AG04449 (cell line): ENCODE measurements at regions of chr1 and their contacts with region 1.

Region 1: GRCh38 chr1:32773018-32773763 is 44.0 kb downstream of the YARS1 start:
- DNase-seq: no peak
- H3K4me3 ChIP-seq: no peak overlapping the region
- CTCF ChIP-seq: peak; percentile 91

Region 2: DNA sequence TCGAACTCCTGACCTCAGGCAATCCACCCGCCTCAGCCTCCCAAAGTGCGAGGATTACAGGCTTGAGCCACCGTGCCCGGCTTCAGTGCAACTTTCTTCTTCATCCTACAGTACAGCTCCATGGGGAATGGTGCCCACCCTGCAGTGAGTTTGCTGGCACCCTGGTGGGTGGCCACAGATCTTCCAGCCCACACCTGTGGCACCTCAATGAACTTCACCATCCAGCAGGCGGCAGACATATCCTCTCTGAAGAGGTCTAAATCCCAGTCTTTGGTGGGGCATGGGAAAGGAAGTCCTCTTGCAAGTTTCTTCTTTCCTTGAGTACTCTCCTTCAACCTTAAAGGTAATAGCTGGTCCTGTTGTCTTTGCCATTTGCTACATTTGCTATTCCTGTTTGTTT is 252.0 kb before region 1 on chr1:
- CTCF ChIA-PET with region 1: interaction called, 64 read pairs
- POLR2A ChIA-PET with region 1: no interaction called
- DNase-seq: no peak
- H3K4me3 ChIP-seq: no peak overlapping the region
- CTCF ChIP-seq: no peak

Region 3: DNA sequence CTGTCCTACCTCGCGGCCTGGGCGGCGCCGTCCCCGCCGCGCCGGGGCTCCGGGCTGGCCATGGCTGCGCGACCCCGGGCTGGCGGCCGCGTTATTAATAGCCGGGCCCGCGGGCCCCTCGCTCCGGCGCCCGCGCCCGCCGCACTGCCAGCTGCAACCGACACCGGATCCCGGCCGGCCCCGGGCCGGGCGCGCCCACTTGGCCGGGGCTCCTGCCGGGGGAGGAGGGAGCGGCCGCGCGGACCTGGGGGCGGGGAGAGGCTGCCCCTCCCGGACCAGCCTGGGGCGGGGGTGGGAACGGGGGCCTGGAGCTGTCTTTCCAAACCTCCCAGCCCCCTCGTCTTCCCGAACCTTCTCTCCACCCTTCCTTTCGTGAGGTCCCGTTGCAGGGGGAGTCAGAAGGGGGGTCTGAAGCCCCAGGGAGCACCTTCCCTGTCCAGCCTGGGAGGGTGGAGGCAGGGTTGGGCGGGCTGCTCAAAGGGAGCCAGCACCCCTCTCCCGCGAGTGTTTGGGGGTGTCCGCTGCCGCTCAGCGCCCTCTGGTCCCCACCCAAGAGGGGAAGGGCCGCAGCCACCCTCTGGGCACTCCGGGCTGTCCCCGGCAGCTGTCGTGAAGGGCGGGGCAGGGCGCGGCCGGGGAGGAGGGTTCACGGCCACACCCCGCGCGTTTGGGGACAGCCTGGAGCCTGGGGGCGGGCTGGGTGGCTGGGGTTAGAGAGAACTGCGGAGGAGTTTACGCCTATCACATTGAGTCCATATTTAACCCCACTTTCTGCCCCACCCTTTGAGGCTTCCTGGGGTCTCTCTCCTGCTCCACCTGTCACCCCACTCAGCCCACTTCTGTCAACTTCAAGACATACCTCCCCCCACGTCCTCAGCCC is 70.4 kb before region 1 on chr1 and contains the start of gene SYNC:
- CTCF ChIA-PET with region 1: interaction called, 299 read pairs
- POLR2A ChIA-PET with region 1: interaction called, 20 read pairs
- DNase-seq: peak; percentile 71
- H3K4me3 ChIP-seq: peak within 1 kb of the TSS; percentile 89
- CTCF ChIP-seq: no peak

Region 4: DNA sequence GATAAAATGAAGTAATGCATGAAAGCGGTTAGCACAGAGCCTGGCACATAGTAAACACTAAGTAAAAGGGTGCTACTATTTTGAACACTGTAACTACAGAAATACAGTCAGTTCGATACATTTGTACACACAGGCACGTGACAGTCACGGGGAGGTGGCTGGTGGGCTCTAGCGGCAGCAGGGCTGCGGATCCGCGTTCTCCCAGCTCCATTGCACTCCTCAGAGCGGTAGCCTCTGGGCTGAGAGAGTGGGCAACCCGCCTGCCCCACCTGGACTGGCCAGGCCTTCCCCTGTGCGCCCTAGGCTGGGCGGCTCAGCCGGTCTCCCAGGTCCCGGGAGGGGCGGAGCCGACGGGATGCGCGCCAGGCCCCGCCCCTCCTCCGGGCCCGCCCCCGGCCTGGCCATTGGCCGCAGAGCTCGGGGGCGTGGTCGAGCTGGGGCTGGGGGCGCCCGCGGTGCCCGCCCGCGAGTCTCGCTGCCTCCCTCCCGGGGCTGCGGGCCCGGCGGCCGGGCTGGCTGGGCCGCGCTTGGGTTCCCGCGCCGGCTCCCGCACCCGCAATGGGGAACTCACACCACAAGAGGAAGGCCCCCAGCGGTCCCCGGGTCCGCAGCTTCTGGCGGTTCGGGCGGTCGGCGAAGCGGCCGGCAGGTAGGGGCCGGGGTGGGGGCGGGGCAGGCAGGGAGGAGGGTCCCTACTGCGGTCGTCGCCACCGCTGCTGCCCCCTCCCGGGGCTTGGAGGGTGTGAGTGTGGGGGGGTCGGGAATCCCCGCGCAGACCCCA is 19.5 kb before region 1 on chr1:
- CTCF ChIA-PET with region 1: interaction called, 32 read pairs
- POLR2A ChIA-PET with region 1: no interaction called
- DNase-seq: no peak
- H3K4me3 ChIP-seq: peak overlapping the region; percentile 68
- CTCF ChIP-seq: no peak

Region 5: DNA sequence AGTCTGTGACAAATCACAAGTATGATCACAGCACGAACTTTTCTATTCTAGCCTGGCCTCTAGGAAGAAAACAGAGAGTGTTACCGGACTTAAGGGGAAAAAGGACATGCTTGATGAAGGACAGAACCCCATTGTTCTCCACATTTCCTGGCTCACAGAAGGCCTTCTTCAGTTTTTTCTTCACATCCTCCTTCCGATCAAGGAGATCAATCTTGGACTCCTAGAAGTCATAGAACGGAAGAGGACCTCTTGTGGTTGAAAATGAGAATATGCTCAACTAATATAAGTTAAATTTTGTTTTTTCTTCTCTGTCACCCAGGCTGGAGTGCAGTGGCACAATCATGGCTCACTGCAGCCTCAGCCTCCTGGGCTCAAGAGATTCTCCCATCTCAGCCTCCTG is 13.7 kb after region 1 on chr1:
- CTCF ChIA-PET with region 1: interaction called, 52 read pairs
- POLR2A ChIA-PET with region 1: interaction called, 5 read pairs
- DNase-seq: no peak
- H3K4me3 ChIP-seq: no peak overlapping the region
- CTCF ChIP-seq: no peak